Naive thymus-derived CD4-positive, alpha-beta T cell (primary cell): ENCODE measurements at regions of chr5 and their contacts with region 1.

Region 1: DNA sequence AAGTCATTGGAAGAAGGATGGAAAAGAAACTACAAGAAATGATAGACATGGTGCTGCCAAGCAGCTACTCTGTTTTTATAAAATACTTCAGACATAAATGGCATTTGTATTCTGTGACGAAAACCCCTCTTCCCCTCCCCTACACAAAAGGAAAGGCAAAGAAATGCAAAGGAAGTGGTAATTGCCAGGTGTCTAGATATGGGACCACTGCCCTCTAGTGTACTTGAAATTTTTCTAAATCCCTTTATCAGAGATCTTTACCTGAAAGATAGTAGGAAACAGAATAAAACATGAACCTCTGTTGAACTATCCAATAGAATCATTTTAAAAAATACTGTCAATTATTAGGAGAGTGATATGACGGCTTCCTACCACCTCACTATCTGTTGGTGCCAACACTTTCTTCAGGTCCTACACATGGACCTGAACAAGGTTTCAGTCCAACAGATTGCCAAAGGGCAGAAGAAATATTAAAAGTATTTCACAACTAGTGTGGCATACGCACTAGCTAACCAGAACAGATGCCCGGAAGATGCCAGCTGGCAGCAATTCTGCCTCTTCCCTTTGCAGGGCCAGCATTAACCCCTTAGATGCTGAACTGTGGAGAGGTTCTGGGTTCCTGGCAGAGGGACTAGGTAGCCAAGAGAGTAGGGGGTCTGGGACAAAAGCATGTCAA is 104.1 kb downstream of the TSSK1B start:
- DNase-seq: peak in 7 of 9 donors; percentile 56 to 80 (median 73)
- ATAC-seq: peak; percentile 91
- H3K4me3 ChIP-seq: no peak overlapping the region
- H3K4me3 Mint-ChIP-seq: peak overlapping the region in 9 of 10 donors; percentile 8 to 63 (median 40)
- H3K27ac ChIP-seq: no peak overlapping the region
- H3K27ac Mint-ChIP-seq: peak overlapping the region in 7 of 9 donors; percentile 3 to 82 (median 71)
- H3K4me1 ChIP-seq: peaks cover 0 to 4% of the 10 kb centered on the region in 2 donors
- H3K4me1 Mint-ChIP-seq: peaks cover 3 to 21% (median 19%) of the 10 kb centered on the region in 7 donors
- H3K27me3 ChIP-seq: peaks cover 0 to under 1% of the 10 kb centered on the region in 2 donors
- H3K27me3 Mint-ChIP-seq: peaks cover 0 to 13% (median 2%) of the 10 kb centered on the region in 5 donors

Region 2: GRCh38 chr5:112551419-112552032 is 779.1 kb before region 1 on chr5:
- CTCF ChIA-PET with region 1: no interaction called
- POLR2A ChIA-PET with region 1: no interaction called
- intact Hi-C with region 1: loop called (anchors 1 to 10 kb)
- DNase-seq: peak in 7 of 9 donors; percentile 23 to 67 (median 48)
- ATAC-seq: peak; percentile 71
- H3K4me3 ChIP-seq: no peak overlapping the region
- H3K4me3 Mint-ChIP-seq: no peak overlapping the region
- H3K27ac ChIP-seq: no peak overlapping the region
- H3K27ac Mint-ChIP-seq: no peak overlapping the region
- H3K4me1 ChIP-seq: no peaks in the 10 kb centered on the region
- H3K4me1 Mint-ChIP-seq: peaks cover 0 to 4% (median 0%) of the 10 kb centered on the region in 7 donors
- H3K27me3 ChIP-seq: no peaks in the 10 kb centered on the region
- H3K27me3 Mint-ChIP-seq: peaks cover 0 to 16% (median 5%) of the 10 kb centered on the region in 5 donors

Region 3: DNA sequence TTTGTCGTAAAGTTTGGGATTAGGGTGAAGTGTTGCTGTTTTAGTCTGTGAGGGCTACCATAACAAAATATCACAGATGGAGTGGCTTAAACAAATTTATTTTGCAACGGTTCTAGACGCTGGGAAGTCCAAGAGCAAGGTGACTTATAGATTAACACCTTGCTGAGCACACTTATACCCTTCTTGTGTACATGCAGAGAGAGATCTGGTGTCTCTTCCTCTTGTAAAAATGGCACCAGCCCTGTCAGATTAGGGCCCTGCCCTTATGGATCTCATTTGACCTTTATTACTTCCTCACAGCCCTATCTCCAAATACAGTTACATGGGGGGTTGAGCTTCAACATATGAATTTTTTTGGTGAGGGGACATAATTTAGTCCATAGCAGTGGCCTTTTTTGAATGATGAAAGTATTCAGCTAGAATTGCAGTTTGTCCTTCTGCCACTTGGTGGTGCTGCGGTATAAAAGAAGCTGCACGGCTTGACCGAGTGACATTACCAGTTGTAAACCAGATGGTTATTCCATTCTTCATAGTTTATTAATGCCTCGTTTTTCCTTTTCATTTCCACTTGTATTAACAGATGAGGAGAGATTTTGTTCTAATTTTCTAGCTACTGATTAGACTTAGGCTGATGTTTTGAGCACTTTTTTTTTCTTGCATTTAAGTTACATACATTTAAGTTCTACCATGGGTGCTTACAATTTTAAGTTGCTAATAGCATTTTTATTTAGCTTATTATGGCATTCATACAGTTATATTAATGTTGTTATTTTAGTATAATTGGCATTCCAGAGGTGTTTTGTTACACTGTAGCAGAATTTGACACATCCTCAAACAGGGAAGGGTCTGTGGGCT is 334.7 kb before region 1 on chr5:
- CTCF ChIA-PET with region 1: interaction called, 49 read pairs
- POLR2A ChIA-PET with region 1: interaction called, 5 read pairs
- intact Hi-C with region 1: loop called (anchors 1 kb)
- DNase-seq: peak; percentile 47 to 77 (median 66)
- ATAC-seq: peak; percentile 90
- H3K4me3 ChIP-seq: no peak overlapping the region
- H3K4me3 Mint-ChIP-seq: peak overlapping the region in 3 of 10 donors; percentile 2 to 38 (median 24)
- H3K27ac ChIP-seq: no peak overlapping the region
- H3K27ac Mint-ChIP-seq: peak overlapping the region in 4 of 9 donors; percentile 29 to 62 (median 48)
- H3K4me1 ChIP-seq: peaks cover 0 to 7% of the 10 kb centered on the region in 2 donors
- H3K4me1 Mint-ChIP-seq: peaks cover 9 to 42% (median 36%) of the 10 kb centered on the region in 7 donors
- H3K27me3 ChIP-seq: no peaks in the 10 kb centered on the region
- H3K27me3 Mint-ChIP-seq: no peaks in the 10 kb centered on the region

Region 4: DNA sequence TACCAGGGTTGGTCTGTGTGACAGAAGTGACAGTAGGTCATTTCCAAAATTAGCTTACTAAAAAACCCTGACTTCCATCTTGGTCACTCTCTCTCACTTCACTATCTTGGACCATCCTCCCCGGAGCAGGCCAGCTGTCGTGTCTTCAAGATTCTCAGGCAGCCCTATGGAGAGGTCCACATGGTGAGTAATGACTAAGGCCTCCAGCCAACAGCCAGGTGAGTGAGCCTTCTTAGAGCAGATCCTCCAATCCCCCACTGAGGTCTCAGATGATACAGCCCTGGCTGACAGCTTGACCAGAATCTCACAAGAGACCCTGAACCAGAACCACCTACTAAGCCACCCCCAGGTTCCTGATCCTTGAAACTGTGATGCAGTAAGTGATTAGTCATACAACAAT is 262.1 kb before region 1 on chr5:
- CTCF ChIA-PET with region 1: interaction called, 3 read pairs
- POLR2A ChIA-PET with region 1: no interaction called
- intact Hi-C with region 1: loop called in 1 of 2 experiments (anchors 5 kb)
- DNase-seq: no peak
- ATAC-seq: no peak
- H3K4me3 ChIP-seq: no peak overlapping the region
- H3K4me3 Mint-ChIP-seq: no peak overlapping the region
- H3K27ac ChIP-seq: no peak overlapping the region
- H3K27ac Mint-ChIP-seq: no peak overlapping the region
- H3K4me1 ChIP-seq: peaks cover 0 to 5% of the 10 kb centered on the region in 2 donors
- H3K4me1 Mint-ChIP-seq: peaks cover 0 to 48% (median 22%) of the 10 kb centered on the region in 7 donors
- H3K27me3 ChIP-seq: no peaks in the 10 kb centered on the region
- H3K27me3 Mint-ChIP-seq: no peaks in the 10 kb centered on the region

Region 5: GRCh38 chr5:113378959-113379541 is 48.4 kb after region 1 on chr5:
- CTCF ChIA-PET with region 1: no interaction called
- POLR2A ChIA-PET with region 1: no interaction called
- intact Hi-C with region 1: loop called (anchors 1 to 2 kb)
- DNase-seq: peak; percentile 8 to 57 (median 41)
- ATAC-seq: peak; percentile 74
- H3K4me3 ChIP-seq: no peak overlapping the region
- H3K4me3 Mint-ChIP-seq: peak overlapping the region; percentile 52 to 78 (median 65)
- H3K27ac ChIP-seq: no peak overlapping the region
- H3K27ac Mint-ChIP-seq: peak overlapping the region in 2 of 9 donors; percentile 8 to 31
- H3K4me1 ChIP-seq: peaks cover 21 to 25% of the 10 kb centered on the region in 2 donors
- H3K4me1 Mint-ChIP-seq: peaks cover 30 to 59% (median 52%) of the 10 kb centered on the region in 7 donors
- H3K27me3 ChIP-seq: no peaks in the 10 kb centered on the region
- H3K27me3 Mint-ChIP-seq: peaks cover 14 to 32% (median 27%) of the 10 kb centered on the region in 5 donors

Region 6: GRCh38 chr5:113606298-113607134 is 275.8 kb after region 1 on chr5:
- CTCF ChIA-PET with region 1: interaction called, 28 read pairs
- POLR2A ChIA-PET with region 1: no interaction called
- intact Hi-C with region 1: loop called (anchors 1 kb)
- DNase-seq: peak in 8 of 9 donors; percentile 29 to 68 (median 56)
- ATAC-seq: peak; percentile 89
- H3K4me3 ChIP-seq: no peak overlapping the region
- H3K4me3 Mint-ChIP-seq: no peak overlapping the region
- H3K27ac ChIP-seq: no peak overlapping the region
- H3K27ac Mint-ChIP-seq: no peak overlapping the region
- H3K4me1 ChIP-seq: no peaks in the 10 kb centered on the region
- H3K4me1 Mint-ChIP-seq: peaks cover 4 to 10% (median 6%) of the 10 kb centered on the region in 7 donors
- H3K27me3 ChIP-seq: no peaks in the 10 kb centered on the region
- H3K27me3 Mint-ChIP-seq: peaks cover 13 to 38% (median 27%) of the 10 kb centered on the region in 5 donors